ENCODE measurements at regions of chr13 and their contacts with region 1.

Region 1: GRCh38 chr13:99528547-99528946 is 27.3 kb downstream of the TM9SF2 start:
- DNase-seq: no peak
- H3K4me3 ChIP-seq: no peak overlapping the region
- H3K27ac ChIP-seq: no peak overlapping the region
- H3K4me1 ChIP-seq: no peaks in the 10 kb centered on the region
- H3K27me3 ChIP-seq: no peaks in the 10 kb centered on the region
- CTCF ChIP-seq: no peak; the same call in 1 of the 2 replicates
- EP300 ChIP-seq: no peak
- RAD21 ChIP-seq: peak; percentile 56

Region 2: GRCh38 chr13:99542788-99543406 is 14.3 kb after region 1 on chr13:
- CTCF ChIA-PET with region 1: interaction called, 11 read pairs
- POLR2A ChIA-PET with region 1: no interaction called
- DNase-seq: no peak
- H3K4me3 ChIP-seq: no peak overlapping the region
- H3K27ac ChIP-seq: no peak overlapping the region
- H3K4me1 ChIP-seq: no peaks in the 10 kb centered on the region; a peak in 2 of 4 replicates
- H3K27me3 ChIP-seq: no peaks in the 10 kb centered on the region
- CTCF ChIP-seq: no peak
- EP300 ChIP-seq: no peak
- RAD21 ChIP-seq: no peak